Activated CD8-positive, alpha-beta T cell treated with anti-CD3 and anti-CD28 coated beads, Interleukin-2, amount 10 ng/mL, durations not matched to agents 7 days and 5 days (primary cell): ENCODE measurements at regions of chr4 and their contacts with region 1.

Region 1: DNA sequence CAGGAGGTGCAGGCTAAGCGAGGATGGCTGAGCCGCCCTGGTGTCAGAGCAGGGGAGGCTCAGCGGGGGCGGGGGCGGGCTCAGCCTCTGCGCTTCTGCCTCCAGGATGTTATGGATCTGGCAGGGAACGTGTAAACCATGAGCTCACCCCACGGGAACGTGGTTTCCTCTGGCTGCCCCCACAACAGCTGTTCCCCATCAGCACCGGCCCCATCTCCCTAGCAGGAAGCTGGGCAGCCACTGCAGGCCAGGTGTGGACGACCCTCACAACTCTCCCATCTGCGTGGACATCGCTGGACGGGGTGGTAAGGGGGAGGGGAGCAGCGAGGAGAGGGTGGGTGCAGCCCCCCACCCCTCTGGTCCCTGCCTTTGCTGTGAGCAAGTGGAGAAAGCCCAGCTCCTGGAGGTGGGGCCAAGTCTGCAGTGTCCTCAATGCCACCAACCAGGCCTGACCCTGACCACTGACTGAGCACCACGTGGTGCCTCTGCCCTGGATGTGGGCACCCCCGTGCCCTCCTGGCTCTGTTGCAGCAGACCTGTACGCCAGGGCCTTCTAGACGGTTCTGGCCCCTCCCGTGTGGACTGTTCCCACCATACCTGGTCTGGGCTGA is 28.1 kb upstream of the SPON2 start:
- DNase-seq: peak; percentile 54
- ATAC-seq: peak; percentile 2
- H3K4me3 Mint-ChIP-seq: peak overlapping the region; percentile 82
- H3K27ac Mint-ChIP-seq: peak overlapping the region; percentile 99
- H3K4me1 Mint-ChIP-seq: peaks cover 60% of the 10 kb centered on the region
- H3K27me3 Mint-ChIP-seq: no peaks in the 10 kb centered on the region

Region 2: GRCh38 chr4:1130316-1131186 is 70.0 kb before region 1 on chr4:
- CTCF ChIA-PET with region 1: interaction called, 17 read pairs
- POLR2A ChIA-PET with region 1: no interaction called
- DNase-seq: peak; percentile 85
- ATAC-seq: peak; percentile 99
- H3K4me3 Mint-ChIP-seq: no peak overlapping the region
- H3K27ac Mint-ChIP-seq: no peak overlapping the region
- H3K4me1 Mint-ChIP-seq: peaks cover 2% of the 10 kb centered on the region
- H3K27me3 Mint-ChIP-seq: peaks cover 19% of the 10 kb centered on the region

Region 3: DNA sequence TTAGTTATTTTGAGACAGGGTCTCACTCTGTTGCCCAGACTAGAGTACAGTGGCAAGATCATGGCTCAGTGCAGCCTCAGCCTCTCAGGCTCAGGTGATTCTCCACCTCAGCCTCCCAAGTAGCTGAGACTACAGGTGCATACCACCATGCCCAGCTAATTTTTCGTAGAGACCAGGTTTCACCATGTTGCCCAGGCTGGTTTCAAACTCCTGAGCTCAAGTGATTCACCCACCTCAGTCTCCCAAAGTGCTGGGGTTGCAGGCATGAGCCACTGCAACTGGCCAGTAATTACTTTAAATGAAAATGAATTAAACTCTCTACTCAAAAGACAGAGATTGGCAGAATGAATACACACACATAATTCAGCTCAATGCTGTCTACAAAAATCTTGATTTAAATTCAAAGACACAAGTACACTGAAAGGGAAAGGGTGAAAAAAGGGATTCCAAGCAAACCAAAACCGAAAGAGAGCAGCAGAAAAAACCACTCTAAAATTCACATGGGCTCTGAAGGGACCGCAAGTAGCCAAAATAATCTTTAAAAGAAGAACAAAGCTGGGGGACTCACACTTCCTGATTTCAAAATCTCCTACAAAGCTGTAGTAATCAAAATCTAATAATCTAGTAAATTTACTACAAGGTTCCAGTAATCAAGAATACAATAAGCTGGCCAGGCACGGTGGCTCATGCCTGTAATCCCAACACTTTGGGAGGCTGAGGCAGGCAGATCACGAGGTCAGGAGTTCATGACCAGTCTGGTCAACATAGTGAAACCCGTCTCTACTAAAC is 16.4 kb before region 1 on chr4:
- CTCF ChIA-PET with region 1: interaction called, 10 read pairs
- POLR2A ChIA-PET with region 1: interaction called, 5 read pairs
- DNase-seq: no peak
- ATAC-seq: peak; percentile 31
- H3K4me3 Mint-ChIP-seq: peak overlapping the region; percentile 61
- H3K27ac Mint-ChIP-seq: peak overlapping the region; percentile 79
- H3K4me1 Mint-ChIP-seq: peaks cover 40% of the 10 kb centered on the region
- H3K27me3 Mint-ChIP-seq: peaks cover 2% of the 10 kb centered on the region

Region 4: DNA sequence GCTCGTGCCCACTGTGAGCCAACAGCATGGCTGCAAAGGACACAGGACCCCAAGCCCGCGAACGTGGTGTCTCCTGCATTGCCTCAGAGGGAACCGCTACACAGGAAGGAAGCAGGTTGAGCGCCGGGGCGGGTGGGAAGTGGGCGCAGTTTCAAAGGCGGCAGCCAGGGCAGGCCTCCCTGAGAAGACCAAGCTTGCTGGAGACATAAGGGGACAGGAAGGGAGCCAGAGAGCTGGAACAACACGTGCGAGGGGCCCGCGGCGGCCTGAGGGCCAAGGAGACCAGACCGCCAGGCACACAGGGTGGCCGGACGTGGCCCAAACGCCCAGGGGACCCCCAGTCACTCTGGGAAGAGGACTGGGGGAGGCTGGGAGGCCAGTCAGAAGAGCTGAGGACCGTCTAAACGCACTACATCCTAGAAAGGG is 16.4 kb after region 1 on chr4:
- CTCF ChIA-PET with region 1: interaction called, 25 read pairs
- POLR2A ChIA-PET with region 1: interaction called, 13 read pairs
- DNase-seq: peak; percentile 87
- ATAC-seq: peak; percentile 96
- H3K4me3 Mint-ChIP-seq: peak overlapping the region; percentile 65
- H3K27ac Mint-ChIP-seq: peak overlapping the region; percentile 89
- H3K4me1 Mint-ChIP-seq: peaks cover 41% of the 10 kb centered on the region
- H3K27me3 Mint-ChIP-seq: no peaks in the 10 kb centered on the region

Region 5: DNA sequence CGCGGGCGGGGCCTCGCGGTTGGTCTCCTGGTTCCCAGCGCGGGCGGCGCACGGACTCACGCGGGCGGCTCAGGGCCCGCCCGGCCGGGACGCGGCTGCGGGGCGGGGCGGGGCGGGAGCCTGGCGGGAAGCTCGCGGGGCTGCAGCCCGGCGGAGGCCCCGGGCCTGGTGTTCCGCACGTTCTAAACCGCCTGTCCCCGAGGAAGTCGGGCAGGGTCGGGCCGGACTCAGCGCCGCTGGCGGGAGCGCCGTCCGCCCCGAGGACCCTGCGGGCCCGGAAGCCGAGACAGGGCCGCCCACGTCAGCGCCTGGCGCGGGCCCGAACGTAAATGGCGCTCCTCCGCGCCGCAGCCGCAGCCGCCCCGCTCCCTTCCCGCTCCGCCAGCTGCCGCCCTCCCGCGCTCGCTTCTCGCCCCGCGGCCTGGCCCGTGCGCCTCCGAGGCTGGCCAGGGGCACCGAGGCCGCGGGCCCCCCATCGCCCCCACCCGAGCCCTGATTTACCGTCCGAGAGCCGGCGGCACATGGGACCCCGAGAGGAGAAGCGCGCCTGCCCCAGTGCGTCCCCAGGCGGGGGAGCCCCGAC is 48.7 kb after region 1 on chr4:
- CTCF ChIA-PET with region 1: interaction called, 4 read pairs
- POLR2A ChIA-PET with region 1: interaction called, 35 read pairs
- DNase-seq: peak; percentile 83
- ATAC-seq: peak; percentile 64
- H3K4me3 Mint-ChIP-seq: peak overlapping the region; percentile 86
- H3K27ac Mint-ChIP-seq: peak overlapping the region; percentile 95
- H3K4me1 Mint-ChIP-seq: peaks cover 66% of the 10 kb centered on the region
- H3K27me3 Mint-ChIP-seq: no peaks in the 10 kb centered on the region

Region 6: GRCh38 chr4:1260418-1261106 is 60.0 kb after region 1 on chr4:
- CTCF ChIA-PET with region 1: no interaction called
- POLR2A ChIA-PET with region 1: no interaction called
- DNase-seq: no peak
- ATAC-seq: no peak
- H3K4me3 Mint-ChIP-seq: no peak overlapping the region
- H3K27ac Mint-ChIP-seq: peak overlapping the region; percentile 63
- H3K4me1 Mint-ChIP-seq: peaks cover 27% of the 10 kb centered on the region
- H3K27me3 Mint-ChIP-seq: no peaks in the 10 kb centered on the region

Region 7: DNA sequence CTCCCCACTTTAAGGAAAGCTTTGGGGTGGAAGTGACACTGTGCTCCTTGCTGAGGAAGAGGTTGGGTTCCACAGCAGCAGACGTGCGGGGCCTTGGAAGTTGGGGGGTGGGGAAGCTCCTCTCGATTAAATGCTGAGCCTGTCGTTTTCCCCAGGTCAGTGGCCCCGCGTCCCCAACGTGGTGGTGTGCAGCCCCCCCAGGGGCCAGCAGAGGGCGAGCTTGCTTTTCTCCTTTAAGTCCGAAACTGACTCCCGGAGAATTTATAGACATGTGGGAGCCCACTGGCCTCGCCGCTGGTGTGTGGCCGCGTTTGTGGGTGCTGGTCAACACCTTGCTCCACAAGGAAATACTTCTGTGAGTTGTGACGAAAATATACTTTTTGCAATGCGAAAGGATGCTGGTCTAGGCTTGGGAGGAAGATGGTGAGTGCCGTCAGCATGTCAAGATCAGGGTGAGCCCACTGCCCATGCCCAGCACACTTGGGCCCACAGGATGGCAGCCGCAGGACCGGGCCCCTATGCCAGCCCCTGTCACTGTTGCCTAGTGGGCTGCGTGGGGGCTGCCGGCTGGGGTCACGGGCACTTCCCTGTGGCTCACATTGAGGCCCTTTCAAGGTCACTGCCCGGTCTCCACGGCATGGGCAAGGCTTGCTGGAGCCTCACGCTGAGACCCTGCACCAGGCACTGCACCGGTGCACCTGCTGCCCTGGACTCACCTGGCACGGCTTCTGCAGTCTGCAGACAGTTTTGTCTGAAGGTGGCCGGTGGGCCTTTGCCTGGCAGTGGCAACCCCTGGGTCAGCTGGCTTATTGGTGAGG is 155.9 kb after region 1 on chr4:
- CTCF ChIA-PET with region 1: no interaction called
- POLR2A ChIA-PET with region 1: no interaction called
- DNase-seq: peak; percentile 59
- ATAC-seq: no peak
- H3K4me3 Mint-ChIP-seq: no peak overlapping the region
- H3K27ac Mint-ChIP-seq: no peak overlapping the region
- H3K4me1 Mint-ChIP-seq: peaks cover 8% of the 10 kb centered on the region
- H3K27me3 Mint-ChIP-seq: no peaks in the 10 kb centered on the region